ENCODE measurements at regions of chr15 and their contacts with region 1.

Region 1: GRCh38 chr15:70722266-70723121 is 40.9 kb downstream of the UACA start:
- DNase-seq: peak; percentile 62
- H3K4me3 ChIP-seq: no peak overlapping the region
- H3K27ac ChIP-seq: peak overlapping the region; percentile 36
- H3K4me1 ChIP-seq: peaks cover 30% of the 10 kb centered on the region
- H3K27me3 ChIP-seq: no peaks in the 10 kb centered on the region
- CTCF ChIP-seq: peak; percentile 44
- POLR2A ChIP-seq: no peak

Region 2: GRCh38 chr15:70466895-70467529 is 255.5 kb before region 1 on chr15:
- CTCF ChIA-PET with region 1: no interaction called
- POLR2A ChIA-PET with region 1: no interaction called
- dilution Hi-C with region 1: no loop called
- intact Hi-C with region 1: no loop called
- DNase-seq: peak; percentile 38
- H3K4me3 ChIP-seq: no peak overlapping the region
- H3K27ac ChIP-seq: no peak overlapping the region
- H3K4me1 ChIP-seq: no peaks in the 10 kb centered on the region
- H3K27me3 ChIP-seq: peaks cover 3 to 6% of the 10 kb centered on the region in 2 experiments
- CTCF ChIP-seq: peak; percentile 46 to 70
- POLR2A ChIP-seq: no peak

Region 3: GRCh38 chr15:70488002-70488605 is 234.4 kb before region 1 on chr15:
- CTCF ChIA-PET with region 1: no interaction called
- POLR2A ChIA-PET with region 1: no interaction called
- dilution Hi-C with region 1: no loop called
- intact Hi-C with region 1: no loop called
- DNase-seq: peak; percentile 77
- H3K4me3 ChIP-seq: no peak overlapping the region
- H3K27ac ChIP-seq: no peak overlapping the region
- H3K4me1 ChIP-seq: peaks cover 4% of the 10 kb centered on the region
- H3K27me3 ChIP-seq: peaks cover 0 to 4% of the 10 kb centered on the region in 2 experiments
- CTCF ChIP-seq: peak; percentile 89 to 90
- POLR2A ChIP-seq: no peak

Region 4: GRCh38 chr15:70670680-70671079 is 51.8 kb before region 1 on chr15:
- CTCF ChIA-PET with region 1: interaction called, 33 read pairs
- POLR2A ChIA-PET with region 1: no interaction called
- dilution Hi-C with region 1: no loop called
- intact Hi-C with region 1: no loop called
- DNase-seq: peak; percentile 32
- H3K4me3 ChIP-seq: no peak overlapping the region
- H3K27ac ChIP-seq: no peak overlapping the region
- H3K4me1 ChIP-seq: peaks cover 6% of the 10 kb centered on the region
- H3K27me3 ChIP-seq: no peaks in the 10 kb centered on the region
- CTCF ChIP-seq: no peak
- POLR2A ChIP-seq: no peak

Region 5: DNA sequence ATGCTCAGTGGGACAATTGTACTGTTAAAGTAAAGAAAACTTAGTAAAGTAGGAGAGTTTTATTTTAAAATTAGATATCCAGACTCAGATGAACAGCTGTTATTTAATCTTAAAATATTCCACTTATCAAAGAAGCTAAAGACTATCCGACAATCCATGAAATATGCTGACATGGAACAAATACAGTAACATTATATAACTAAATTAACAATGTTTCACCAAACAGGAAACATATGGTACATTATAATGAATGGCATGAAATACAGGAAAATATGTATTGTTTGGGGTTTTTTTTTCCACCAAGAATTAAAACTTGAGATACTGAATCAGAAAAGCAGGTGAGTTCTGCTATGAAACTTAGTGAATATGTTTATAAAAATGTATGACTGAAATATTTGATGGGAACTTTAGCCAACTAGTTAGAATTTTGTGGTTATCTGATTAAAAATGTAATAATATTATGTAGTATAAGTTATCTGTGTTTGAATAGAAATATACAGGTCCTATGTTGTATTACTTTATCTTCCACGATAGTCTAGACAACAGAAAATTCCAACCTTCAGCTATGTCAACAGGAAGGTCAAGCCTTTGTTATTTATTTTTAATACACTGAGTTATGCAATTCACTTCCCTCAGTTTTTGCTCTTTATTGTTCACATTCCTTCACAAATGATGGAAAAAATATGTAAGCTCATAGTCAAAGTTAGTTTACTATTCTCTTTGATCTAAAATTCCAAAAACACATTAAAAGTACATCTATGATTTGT is 31.8 kb before region 1 on chr15:
- CTCF ChIA-PET with region 1: interaction called, 48 read pairs
- POLR2A ChIA-PET with region 1: interaction called, 4 read pairs
- dilution Hi-C with region 1: no loop called
- intact Hi-C with region 1: no loop called
- DNase-seq: peak; percentile 82
- H3K4me3 ChIP-seq: peak overlapping the region in 1 of 3 experiments; percentile 38
- H3K27ac ChIP-seq: peak overlapping the region; percentile 67
- H3K4me1 ChIP-seq: peaks cover 45% of the 10 kb centered on the region
- H3K27me3 ChIP-seq: no peaks in the 10 kb centered on the region
- CTCF ChIP-seq: no peak
- POLR2A ChIP-seq: no peak

Region 6: DNA sequence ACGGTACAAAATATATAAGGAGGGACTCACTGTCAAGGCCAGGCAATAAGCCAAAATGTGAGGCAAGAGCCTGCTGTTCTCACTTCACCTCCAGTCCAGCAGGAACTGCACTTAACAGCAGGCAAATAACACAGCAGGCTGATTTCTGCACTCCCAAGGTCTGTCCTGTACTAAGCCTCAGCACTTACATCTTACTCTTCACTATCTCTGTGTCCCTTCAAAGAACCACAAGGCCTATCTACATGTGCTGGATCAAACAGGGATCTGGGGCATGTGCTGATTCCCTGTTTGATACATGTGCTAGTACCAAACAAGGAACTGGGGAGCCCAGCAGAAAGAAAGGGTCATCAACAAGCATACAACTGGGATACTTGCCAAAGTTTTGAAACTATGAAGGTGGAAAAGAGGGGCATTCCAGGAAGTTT is 18.6 kb after region 1 on chr15:
- CTCF ChIA-PET with region 1: interaction called, 12 read pairs
- POLR2A ChIA-PET with region 1: no interaction called
- dilution Hi-C with region 1: no loop called
- intact Hi-C with region 1: no loop called
- DNase-seq: peak; percentile 78
- H3K4me3 ChIP-seq: no peak overlapping the region
- H3K27ac ChIP-seq: peak overlapping the region; percentile 66
- H3K4me1 ChIP-seq: peaks cover 27% of the 10 kb centered on the region
- H3K27me3 ChIP-seq: no peaks in the 10 kb centered on the region
- CTCF ChIP-seq: no peak
- POLR2A ChIP-seq: no peak

Region 7: DNA sequence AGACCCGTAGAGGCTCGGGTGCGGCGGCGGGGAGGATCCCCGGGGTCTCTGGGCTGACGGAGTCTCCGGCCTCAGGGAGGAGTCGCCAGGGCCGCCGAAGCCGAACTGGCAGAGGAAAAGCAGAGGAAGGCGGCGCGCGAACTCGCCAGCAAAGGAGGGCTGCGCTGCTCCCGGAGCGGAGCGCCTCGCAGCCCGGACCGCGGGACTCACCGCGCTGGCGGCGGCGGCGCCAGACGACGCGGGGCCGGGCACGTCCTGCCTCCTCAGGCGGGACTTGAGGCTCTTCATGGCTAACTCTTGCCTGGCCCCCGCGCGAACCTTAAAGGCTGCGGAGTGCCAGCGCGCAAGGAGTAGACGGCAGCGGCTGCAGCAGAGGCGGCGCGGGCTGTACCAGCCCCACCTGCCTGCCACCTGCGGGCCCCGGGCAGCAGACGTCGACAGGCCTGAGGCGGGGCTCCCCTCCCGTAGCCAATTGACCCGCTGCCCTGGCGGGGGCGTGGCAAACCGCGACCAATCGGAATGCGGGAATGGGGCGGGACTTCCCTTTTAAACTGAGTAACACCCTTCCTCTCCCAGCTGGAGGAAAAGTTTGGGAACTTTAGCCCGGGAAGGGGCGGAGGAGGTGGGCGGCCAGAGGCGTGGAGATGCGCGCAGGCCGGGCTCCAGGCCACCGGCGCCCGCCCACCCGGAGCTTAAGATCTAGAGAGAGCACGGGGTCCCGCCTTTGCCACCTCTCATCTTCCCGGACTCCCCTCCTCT is 40.8 kb after region 1 on chr15 and contains the start of gene UACA:
- CTCF ChIA-PET with region 1: interaction called, 23 read pairs
- POLR2A ChIA-PET with region 1: interaction called, 3 read pairs
- dilution Hi-C with region 1: no loop called
- intact Hi-C with region 1: no loop called
- DNase-seq: peak; percentile 99
- H3K4me3 ChIP-seq: peak within 1 kb of the TSS; percentile 71 to 90 (median 89)
- H3K27ac ChIP-seq: peak within 1 kb of the TSS; percentile 83
- H3K4me1 ChIP-seq: peaks cover 32% of the 10 kb centered on the region
- H3K27me3 ChIP-seq: no peaks in the 10 kb centered on the region
- CTCF ChIP-seq: no peak
- POLR2A ChIP-seq: peak; percentile 91
- total RNA-seq, gene UACA: 270 and 292 TPM in 2 replicates

Region 8: GRCh38 chr15:70799667-70800450 is 77.4 kb after region 1 on chr15:
- CTCF ChIA-PET with region 1: interaction called, 33 read pairs
- POLR2A ChIA-PET with region 1: no interaction called
- dilution Hi-C with region 1: no loop called
- intact Hi-C with region 1: no loop called
- DNase-seq: peak; percentile 94
- H3K4me3 ChIP-seq: no peak overlapping the region
- H3K27ac ChIP-seq: peak overlapping the region; percentile 66
- H3K4me1 ChIP-seq: peaks cover 33% of the 10 kb centered on the region
- H3K27me3 ChIP-seq: no peaks in the 10 kb centered on the region
- CTCF ChIP-seq: no peak
- POLR2A ChIP-seq: no peak

Region 9: DNA sequence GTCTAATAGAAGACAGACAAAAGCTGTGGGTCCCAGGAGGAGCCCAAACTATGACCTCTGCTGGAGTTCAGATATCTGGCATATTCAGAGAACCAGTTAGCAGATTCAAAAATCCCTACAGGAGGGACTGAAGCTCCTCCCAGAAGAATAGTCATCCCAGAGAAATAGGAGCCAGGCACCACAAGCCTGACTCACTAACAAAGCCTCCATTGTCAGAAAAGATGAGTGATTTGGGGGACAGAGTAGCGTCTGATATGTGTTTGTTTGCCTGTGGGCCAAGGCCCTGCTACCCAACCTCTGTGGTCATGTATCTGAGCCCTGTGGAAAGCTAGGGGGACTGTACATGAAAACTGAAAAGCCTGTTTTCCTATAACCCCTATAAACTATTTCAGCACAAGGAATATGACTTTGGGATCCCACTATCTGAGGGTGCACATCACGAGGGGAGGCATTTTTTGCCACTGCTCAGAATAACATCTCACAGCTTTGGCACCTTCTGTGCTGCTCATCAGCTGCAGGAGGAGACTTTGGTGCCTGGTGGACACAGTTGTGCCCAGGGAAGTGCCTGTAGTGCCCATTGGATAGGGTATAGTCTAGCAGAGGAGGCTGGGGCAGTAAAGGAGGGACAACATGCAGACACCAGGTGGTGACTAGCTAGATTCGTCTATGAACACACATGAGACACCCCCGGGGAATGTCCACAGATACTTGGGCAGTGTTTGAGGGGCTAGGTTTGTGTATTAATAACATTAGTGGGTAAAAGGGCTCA is 141.1 kb after region 1 on chr15:
- CTCF ChIA-PET with region 1: no interaction called
- POLR2A ChIA-PET with region 1: no interaction called
- dilution Hi-C with region 1: no loop called
- intact Hi-C with region 1: no loop called
- DNase-seq: peak; percentile 18
- H3K4me3 ChIP-seq: no peak overlapping the region
- H3K27ac ChIP-seq: no peak overlapping the region
- H3K4me1 ChIP-seq: no peaks in the 10 kb centered on the region
- H3K27me3 ChIP-seq: no peaks in the 10 kb centered on the region
- CTCF ChIP-seq: no peak
- POLR2A ChIP-seq: no peak

Region 10: GRCh38 chr15:70875001-70875782 is 152.7 kb after region 1 on chr15:
- CTCF ChIA-PET with region 1: interaction called, 30 read pairs
- POLR2A ChIA-PET with region 1: no interaction called
- dilution Hi-C with region 1: no loop called
- intact Hi-C with region 1: no loop called
- DNase-seq: peak; percentile 48
- H3K4me3 ChIP-seq: no peak overlapping the region
- H3K27ac ChIP-seq: no peak overlapping the region
- H3K4me1 ChIP-seq: peaks cover 8% of the 10 kb centered on the region
- H3K27me3 ChIP-seq: no peaks in the 10 kb centered on the region
- CTCF ChIP-seq: peak; percentile 23 to 45
- POLR2A ChIP-seq: no peak

Region 11: GRCh38 chr15:71743861-71744382 is 1021.4 kb after region 1 on chr15:
- CTCF ChIA-PET with region 1: no interaction called
- POLR2A ChIA-PET with region 1: no interaction called
- dilution Hi-C with region 1: no loop called
- intact Hi-C with region 1: no loop called
- DNase-seq: peak; percentile 53
- H3K4me3 ChIP-seq: no peak overlapping the region
- H3K27ac ChIP-seq: no peak overlapping the region
- H3K4me1 ChIP-seq: peaks cover 19% of the 10 kb centered on the region
- H3K27me3 ChIP-seq: no peaks in the 10 kb centered on the region
- CTCF ChIP-seq: peak; percentile 55 to 59
- POLR2A ChIP-seq: no peak

Measured in endothelial cell of umbilical vein (primary cell).